ENCODE measurements at regions of chr4 and their contacts with region 1.

Region 1: GRCh38 chr4:180636696-180637404 is 1606.4 kb upstream of the TENM3 start:
- DNase-seq: no peak
- ATAC-seq: no peak
- H3K4me3 ChIP-seq: no peak overlapping the region
- H3K4me3 Mint-ChIP-seq: no peak overlapping the region
- H3K27ac ChIP-seq: no peak overlapping the region
- H3K27ac Mint-ChIP-seq: no peak overlapping the region
- H3K4me1 ChIP-seq: no peaks in the 10 kb centered on the region
- H3K4me1 Mint-ChIP-seq: no peaks in the 10 kb centered on the region
- H3K27me3 ChIP-seq: no peaks in the 10 kb centered on the region
- H3K27me3 Mint-ChIP-seq: no peaks in the 10 kb centered on the region
- CTCF ChIP-seq: no peak

Region 2: GRCh38 chr4:180197471-180197870 is 439.4 kb before region 1 on chr4:
- CTCF ChIA-PET with region 1: no interaction called
- POLR2A ChIA-PET with region 1: no interaction called
- intact Hi-C with region 1: loop called in 1 of 2 experiments (anchors 5 kb)
- DNase-seq: no peak
- ATAC-seq: no peak
- H3K4me3 ChIP-seq: no peak overlapping the region
- H3K4me3 Mint-ChIP-seq: no peak overlapping the region
- H3K27ac ChIP-seq: no peak overlapping the region
- H3K27ac Mint-ChIP-seq: no peak overlapping the region
- H3K4me1 ChIP-seq: no peaks in the 10 kb centered on the region
- H3K4me1 Mint-ChIP-seq: no peaks in the 10 kb centered on the region
- H3K27me3 ChIP-seq: no peaks in the 10 kb centered on the region
- H3K27me3 Mint-ChIP-seq: no peaks in the 10 kb centered on the region
- CTCF ChIP-seq: no peak

Region 3: GRCh38 chr4:180751009-180751408 is 114.2 kb after region 1 on chr4:
- CTCF ChIA-PET with region 1: no interaction called
- POLR2A ChIA-PET with region 1: no interaction called
- intact Hi-C with region 1: no loop called
- DNase-seq: no peak
- ATAC-seq: no peak
- H3K4me3 ChIP-seq: no peak overlapping the region
- H3K4me3 Mint-ChIP-seq: no peak overlapping the region
- H3K27ac ChIP-seq: no peak overlapping the region
- H3K27ac Mint-ChIP-seq: no peak overlapping the region
- H3K4me1 ChIP-seq: no peaks in the 10 kb centered on the region
- H3K4me1 Mint-ChIP-seq: no peaks in the 10 kb centered on the region
- H3K27me3 ChIP-seq: no peaks in the 10 kb centered on the region
- H3K27me3 Mint-ChIP-seq: no peaks in the 10 kb centered on the region
- CTCF ChIP-seq: no peak

Measured in CD8-positive, alpha-beta T cell (primary cell).